Prostate gland (tissue), 2 donors: ENCODE measurements at regions of chr12 and their contacts with region 1.

Region 1: DNA sequence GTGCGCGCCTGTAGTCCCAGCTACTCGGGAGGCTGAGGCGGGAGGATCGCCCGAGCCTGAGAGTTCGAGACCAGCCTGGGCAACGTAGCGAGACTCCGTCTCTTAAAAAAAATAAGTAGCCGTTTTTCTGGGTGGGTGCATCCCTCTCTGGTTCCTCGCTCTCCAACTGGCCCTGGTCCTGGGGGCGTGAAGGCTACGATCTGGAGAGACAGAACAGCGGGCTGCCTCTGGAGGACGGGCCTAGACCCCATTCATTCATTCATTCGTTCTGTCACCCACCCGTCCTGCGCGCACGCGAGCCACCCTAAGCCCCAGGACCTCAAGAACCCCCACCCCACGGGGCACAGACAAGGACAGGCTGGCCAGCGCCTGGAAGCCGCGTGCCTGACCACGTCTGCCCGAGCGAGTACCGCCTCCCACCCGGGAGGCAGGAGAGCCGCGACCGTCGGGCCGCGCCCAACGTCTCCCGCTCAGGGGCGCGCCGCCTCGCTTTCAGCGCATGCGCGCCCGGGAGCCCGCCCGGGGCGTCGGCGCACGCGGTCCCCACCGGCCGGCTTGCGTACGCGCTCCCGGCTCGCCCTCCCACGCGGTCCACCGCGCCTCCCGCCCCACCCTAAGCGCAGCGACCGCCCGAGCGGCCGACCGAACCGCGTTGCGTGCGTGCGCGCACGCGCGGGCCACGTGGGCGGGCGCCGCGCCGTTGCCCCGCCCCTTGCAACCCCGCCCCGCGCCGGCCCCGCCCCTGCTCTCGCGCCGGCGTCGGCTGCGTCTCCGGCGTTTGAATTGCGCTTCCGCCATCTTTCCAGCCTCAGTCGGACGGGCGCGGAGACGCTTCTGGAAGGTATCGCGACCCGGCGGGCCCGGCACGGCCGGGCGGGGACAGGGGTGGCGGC is at the start of gene RAN:
- DNase-seq: peak; percentile 87
- H3K4me3 ChIP-seq: peak within 1 kb of the TSS; percentile 83 to 95
- H3K27ac ChIP-seq: peak within 1 kb of the TSS; percentile 79 to 91
- H3K4me1 ChIP-seq: no peaks in the 10 kb centered on the region
- H3K27me3 ChIP-seq: no peaks in the 10 kb centered on the region
- CTCF ChIP-seq: peak in 1 of 4 experiments; percentile 22
- POLR2A ChIP-seq: peak; percentile 40
- total RNA-seq, gene RAN: 131 to 220 TPM

Region 2: GRCh38 chr12:130775953-130776856 is 95.3 kb before region 1 on chr12:
- intact Hi-C with region 1: no loop called
- DNase-seq: no peak
- H3K4me3 ChIP-seq: no peak overlapping the region
- H3K27ac ChIP-seq: no peak overlapping the region
- H3K4me1 ChIP-seq: no peaks in the 10 kb centered on the region
- H3K27me3 ChIP-seq: no peaks in the 10 kb centered on the region
- CTCF ChIP-seq: no peak
- POLR2A ChIP-seq: no peak

Region 3: GRCh38 chr12:130838951-130839769 is 32.4 kb before region 1 on chr12 and contains the start of gene STX2:
- intact Hi-C with region 1: loop called (anchors 2 kb)
- DNase-seq: peak; percentile 70
- H3K4me3 ChIP-seq: peak within 1 kb of the TSS; percentile 76 to 77
- H3K27ac ChIP-seq: peak within 1 kb of the TSS; percentile 56 to 69
- H3K4me1 ChIP-seq: no peaks in the 10 kb centered on the region
- H3K27me3 ChIP-seq: no peaks in the 10 kb centered on the region
- CTCF ChIP-seq: peak in 1 of 4 experiments; percentile 6
- POLR2A ChIP-seq: no peak
- total RNA-seq, gene STX2: 5.3 to 11.5 TPM